ENCODE measurements at regions of chr14 and their contacts with region 1.

Region 1: DNA sequence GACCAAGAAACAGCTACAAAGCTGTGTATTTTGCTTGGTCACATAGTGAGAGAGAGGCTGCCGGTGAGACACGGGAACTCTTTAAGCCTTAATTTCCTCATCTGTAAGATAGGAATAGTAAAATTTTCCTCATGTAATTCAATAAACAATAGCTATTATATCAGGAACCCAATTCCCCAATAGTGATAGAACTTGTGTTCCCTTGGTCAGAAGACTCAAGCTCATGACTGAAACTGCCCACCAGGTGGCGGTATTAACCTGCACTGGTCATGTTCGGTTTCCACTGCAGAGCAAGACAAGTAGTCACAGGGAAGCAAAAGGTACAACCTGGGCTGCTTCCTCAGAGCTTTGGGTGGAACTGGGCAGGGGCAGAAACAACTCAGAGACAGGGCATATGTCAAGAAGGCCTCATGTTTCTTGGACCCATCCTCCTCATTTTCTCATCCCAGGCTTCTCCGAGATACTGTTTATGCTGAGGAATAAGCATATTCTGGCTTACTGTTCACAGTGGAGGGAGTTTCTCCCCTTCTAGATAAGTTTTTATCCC is 4.2 kb upstream of the AJUBA start:
- DNase-seq: peak; percentile 95
- ATAC-seq: peak; percentile 61
- H3K4me3 Mint-ChIP-seq: no peak overlapping the region
- H3K27ac Mint-ChIP-seq: no peak overlapping the region
- H3K4me1 Mint-ChIP-seq: no peaks in the 10 kb centered on the region
- H3K27me3 Mint-ChIP-seq: no peaks in the 10 kb centered on the region

Region 2: DNA sequence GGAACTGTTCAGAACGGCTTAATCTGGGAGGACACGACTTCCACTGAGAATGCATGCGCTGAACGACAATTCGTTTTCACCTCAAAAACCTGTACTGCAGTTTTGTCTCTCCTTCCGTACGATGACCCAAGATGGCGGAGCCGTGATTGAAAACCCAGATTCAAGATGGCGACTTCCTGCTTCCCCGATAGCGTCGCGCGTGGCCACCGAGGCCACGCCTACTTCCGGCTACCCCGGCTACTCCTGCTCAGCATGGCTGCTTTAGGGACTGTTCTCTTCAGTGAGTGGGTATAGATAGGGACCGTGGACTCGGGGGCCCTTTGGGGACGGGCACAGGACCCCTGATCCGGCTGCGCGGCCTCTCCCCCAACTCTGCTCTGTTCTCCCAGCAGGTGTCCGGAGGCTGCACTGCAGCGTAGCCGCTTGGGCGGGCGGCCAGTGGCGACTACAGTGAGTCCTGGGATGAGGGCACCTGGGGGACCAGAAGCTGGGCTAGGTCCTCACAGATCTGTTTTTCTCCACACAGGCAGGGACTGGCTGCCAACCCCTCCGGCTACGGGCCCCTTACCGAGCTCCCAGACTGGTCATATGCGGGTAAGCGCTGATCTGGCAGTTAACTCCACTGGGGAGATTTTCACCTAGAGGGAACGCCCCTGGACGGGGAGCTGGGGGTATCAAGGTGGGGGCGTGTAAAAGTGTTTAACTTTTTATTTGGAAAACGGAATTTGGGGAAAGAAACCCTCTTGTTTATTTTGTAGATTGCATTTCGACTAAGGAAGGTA is 156.7 kb before region 1 on chr14 and contains the start of gene MRPL52:
- CTCF ChIA-PET with region 1: interaction called, 4 read pairs
- POLR2A ChIA-PET with region 1: no interaction called
- intact Hi-C with region 1: loop called in 1 of 2 experiments (anchors 10 kb)
- DNase-seq: peak; percentile 94
- ATAC-seq: peak; percentile 92
- H3K4me3 Mint-ChIP-seq: peak within 1 kb of the TSS; percentile 82
- H3K27ac Mint-ChIP-seq: peak within 1 kb of the TSS; percentile 98
- H3K4me1 Mint-ChIP-seq: peaks cover 26% of the 10 kb centered on the region
- H3K27me3 Mint-ChIP-seq: no peaks in the 10 kb centered on the region
- total RNA-seq, gene MRPL52: 115 to 136 TPM

Region 3: GRCh38 chr14:22935156-22935555 is 51.4 kb before region 1 on chr14:
- CTCF ChIA-PET with region 1: interaction called, 37 read pairs
- POLR2A ChIA-PET with region 1: no interaction called
- intact Hi-C with region 1: loop called in 1 of 2 experiments (anchors 1 kb)
- DNase-seq: no peak
- ATAC-seq: no peak
- H3K4me3 Mint-ChIP-seq: no peak overlapping the region
- H3K27ac Mint-ChIP-seq: no peak overlapping the region
- H3K4me1 Mint-ChIP-seq: peaks cover 16% of the 10 kb centered on the region
- H3K27me3 Mint-ChIP-seq: no peaks in the 10 kb centered on the region

Region 4: DNA sequence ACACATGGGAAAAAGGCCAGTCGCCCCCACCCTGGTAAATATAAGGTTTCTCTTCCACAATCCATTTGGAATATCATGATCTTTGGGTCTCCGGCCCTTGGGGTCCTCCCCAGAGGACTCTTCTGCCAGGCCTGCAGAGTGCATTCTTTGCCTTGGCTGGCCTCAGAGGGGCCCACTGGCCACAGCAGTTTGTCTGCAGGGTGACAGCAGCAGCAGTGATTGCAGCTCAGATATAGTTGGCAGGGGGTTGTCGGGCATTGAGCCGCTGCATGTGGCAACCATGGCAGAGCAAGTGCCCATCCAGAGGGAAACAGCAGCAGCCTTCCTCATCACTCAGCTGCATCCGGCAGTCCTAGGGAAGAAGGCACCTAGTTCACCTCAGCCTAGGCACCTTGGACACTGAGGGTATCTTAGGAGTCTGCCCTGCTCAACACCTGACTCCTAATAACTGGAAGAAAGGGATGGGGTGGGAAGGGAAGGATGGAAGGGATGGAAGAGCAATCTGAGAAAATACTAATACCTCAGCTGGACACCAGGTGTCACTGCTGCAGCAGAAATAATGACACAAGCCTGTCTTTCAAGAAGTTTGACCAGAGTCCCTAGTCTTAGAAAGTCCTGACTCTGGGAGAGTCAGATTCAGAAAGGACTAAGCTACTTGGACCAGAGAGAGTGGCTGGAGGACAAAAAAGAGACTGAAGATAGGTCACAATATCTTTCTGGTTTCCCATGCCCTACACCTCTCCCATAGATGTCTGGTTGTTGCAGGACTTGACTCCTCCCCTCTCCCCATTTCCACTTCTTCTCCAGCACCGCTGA is 13.2 kb before region 1 on chr14:
- CTCF ChIA-PET with region 1: interaction called, 99 read pairs
- POLR2A ChIA-PET with region 1: interaction called, 3 read pairs
- intact Hi-C with region 1: loop called (anchors 1 kb)
- DNase-seq: peak; percentile 56
- ATAC-seq: peak; percentile 71
- H3K4me3 Mint-ChIP-seq: no peak overlapping the region
- H3K27ac Mint-ChIP-seq: no peak overlapping the region
- H3K4me1 Mint-ChIP-seq: no peaks in the 10 kb centered on the region
- H3K27me3 Mint-ChIP-seq: no peaks in the 10 kb centered on the region

Region 5: GRCh38 chr14:23034483-23035302 is 48.1 kb after region 1 on chr14 and contains the start of gene PSMB5:
- CTCF ChIA-PET with region 1: interaction called, 18 read pairs
- POLR2A ChIA-PET with region 1: no interaction called
- intact Hi-C with region 1: loop called in 1 of 2 experiments (anchors 1 kb)
- DNase-seq: peak; percentile 94
- ATAC-seq: peak; percentile 95
- H3K4me3 Mint-ChIP-seq: peak within 1 kb of the TSS; percentile 97
- H3K27ac Mint-ChIP-seq: peak within 1 kb of the TSS; percentile 97
- H3K4me1 Mint-ChIP-seq: peaks cover 36% of the 10 kb centered on the region
- H3K27me3 Mint-ChIP-seq: no peaks in the 10 kb centered on the region
- total RNA-seq, gene PSMB5: 104 to 129 TPM

Region 6: DNA sequence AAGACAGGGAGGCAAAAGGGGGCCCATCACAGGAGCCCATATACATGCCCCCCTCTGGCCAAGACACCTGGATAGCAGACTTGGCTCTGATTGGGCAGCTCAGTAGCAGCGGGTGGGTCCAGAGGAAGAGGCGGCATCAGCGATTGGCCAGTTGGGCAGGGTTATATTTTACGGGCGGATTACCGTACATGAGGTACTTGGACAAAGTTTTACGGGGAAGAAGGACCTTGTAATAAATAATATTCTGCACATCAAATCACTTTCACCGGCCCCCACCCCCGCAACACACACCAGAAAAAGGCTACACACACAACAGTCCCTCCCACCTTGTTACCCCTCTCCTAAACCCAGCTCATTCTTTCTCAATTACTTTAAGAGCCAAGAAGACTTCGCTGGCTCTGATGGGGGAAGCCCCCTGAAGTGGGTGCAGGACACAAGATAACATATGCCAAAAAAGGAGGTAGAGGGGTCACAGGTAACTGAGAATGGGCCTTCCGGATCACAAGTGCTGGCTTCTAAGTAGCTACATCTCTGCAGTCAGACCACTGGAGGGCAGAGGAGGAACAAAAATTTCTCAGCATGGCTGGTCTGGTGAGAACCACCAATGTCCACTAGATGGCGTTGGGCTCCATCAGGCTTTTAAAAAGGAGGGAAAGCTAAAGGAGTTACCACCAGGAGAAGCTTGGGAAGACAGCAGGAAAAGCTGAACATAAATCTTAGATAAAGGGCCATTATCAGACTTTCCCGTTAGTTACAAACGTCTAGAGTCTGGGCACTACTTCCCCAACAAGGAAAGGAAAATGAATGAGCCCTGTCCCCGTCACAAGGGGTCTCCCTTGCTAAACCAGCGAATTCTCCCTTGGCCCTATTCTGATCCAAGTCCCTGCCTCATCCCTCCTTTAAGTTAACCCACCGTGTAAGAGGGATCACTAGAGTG is 82.2 kb after region 1 on chr14:
- CTCF ChIA-PET with region 1: interaction called, 751 read pairs
- POLR2A ChIA-PET with region 1: interaction called, 4 read pairs
- intact Hi-C with region 1: no loop called
- DNase-seq: peak; percentile 84
- ATAC-seq: peak; percentile 79
- H3K4me3 Mint-ChIP-seq: peak overlapping the region; percentile 5
- H3K27ac Mint-ChIP-seq: peak overlapping the region; percentile 80
- H3K4me1 Mint-ChIP-seq: peaks cover 37% of the 10 kb centered on the region
- H3K27me3 Mint-ChIP-seq: no peaks in the 10 kb centered on the region

Region 7: GRCh38 chr14:23186913-23187654 is 200.5 kb after region 1 on chr14:
- CTCF ChIA-PET with region 1: interaction called, 3 read pairs
- POLR2A ChIA-PET with region 1: no interaction called
- intact Hi-C with region 1: loop called in 1 of 2 experiments (anchors 5 kb)
- DNase-seq: peak; percentile 39
- ATAC-seq: peak; percentile 74
- H3K4me3 Mint-ChIP-seq: no peak overlapping the region
- H3K27ac Mint-ChIP-seq: no peak overlapping the region
- H3K4me1 Mint-ChIP-seq: peaks cover 2% of the 10 kb centered on the region
- H3K27me3 Mint-ChIP-seq: no peaks in the 10 kb centered on the region